Activated T-helper 2 cell treated with anti-CD3 and anti-CD28 coated beads, Interferon-gamma antibody, Interleukin-2, Interleukin-4, amounts not matched to agents 10 μg/mL and 5 μg/mL and 100 μg/mL, durations not matched to agents 14 hours and 24 hours and 36 hours (primary cell): ENCODE measurements at regions of chr12 and their contacts with region 1.

Region 1: DNA sequence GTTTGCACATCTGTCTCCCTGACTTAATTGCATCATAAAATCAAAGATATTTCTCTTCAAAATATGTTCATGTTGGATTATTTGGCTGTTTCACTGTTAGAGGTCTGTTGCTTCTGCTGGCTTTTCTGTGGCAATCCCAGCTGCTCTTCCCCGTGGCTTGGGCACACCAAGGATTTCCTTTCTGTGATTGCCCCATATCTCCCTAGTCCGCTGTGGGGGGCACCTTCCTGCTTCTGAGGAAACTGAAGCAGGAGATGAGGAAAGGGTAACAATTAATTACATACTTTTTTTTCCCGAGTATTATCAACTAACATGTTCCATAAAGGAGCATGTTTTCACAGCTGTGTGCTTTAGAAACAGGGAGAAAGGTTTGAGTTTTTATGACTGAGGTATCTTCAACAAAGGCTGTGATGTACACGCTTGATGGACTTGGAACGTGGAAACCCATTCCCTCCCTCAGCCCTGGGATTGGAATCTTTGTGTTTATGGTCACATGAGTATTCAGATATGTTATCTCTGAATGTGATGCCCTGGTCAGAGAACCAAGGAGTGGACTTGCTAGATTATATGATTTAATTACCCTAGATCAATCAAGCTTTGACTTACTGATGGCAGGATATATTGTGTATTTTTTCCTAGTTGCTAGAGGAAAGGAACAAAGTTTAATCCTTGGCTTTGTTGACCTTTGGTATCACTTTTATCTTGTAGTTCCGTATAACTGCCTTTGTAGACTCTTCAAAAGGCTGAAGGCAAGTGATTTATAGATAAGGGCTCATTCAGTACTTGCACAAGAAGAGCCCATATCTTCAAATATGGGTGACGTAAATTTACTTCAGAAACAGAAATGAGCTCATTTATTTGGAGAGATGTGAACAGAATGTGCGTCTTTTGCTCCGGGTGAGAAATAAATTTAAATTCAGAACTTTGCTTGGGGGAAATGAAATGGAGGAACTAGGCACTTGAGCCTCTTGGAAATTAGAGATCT is 46.7 kb downstream of the BORCS5 start:
- DNase-seq: no peak
- H3K4me3 Mint-ChIP-seq: peak overlapping the region; percentile 49
- H3K27ac Mint-ChIP-seq: peak overlapping the region; percentile 90
- H3K4me1 Mint-ChIP-seq: peaks cover 58% of the 10 kb centered on the region
- H3K27me3 Mint-ChIP-seq: no peaks in the 10 kb centered on the region

Region 2: DNA sequence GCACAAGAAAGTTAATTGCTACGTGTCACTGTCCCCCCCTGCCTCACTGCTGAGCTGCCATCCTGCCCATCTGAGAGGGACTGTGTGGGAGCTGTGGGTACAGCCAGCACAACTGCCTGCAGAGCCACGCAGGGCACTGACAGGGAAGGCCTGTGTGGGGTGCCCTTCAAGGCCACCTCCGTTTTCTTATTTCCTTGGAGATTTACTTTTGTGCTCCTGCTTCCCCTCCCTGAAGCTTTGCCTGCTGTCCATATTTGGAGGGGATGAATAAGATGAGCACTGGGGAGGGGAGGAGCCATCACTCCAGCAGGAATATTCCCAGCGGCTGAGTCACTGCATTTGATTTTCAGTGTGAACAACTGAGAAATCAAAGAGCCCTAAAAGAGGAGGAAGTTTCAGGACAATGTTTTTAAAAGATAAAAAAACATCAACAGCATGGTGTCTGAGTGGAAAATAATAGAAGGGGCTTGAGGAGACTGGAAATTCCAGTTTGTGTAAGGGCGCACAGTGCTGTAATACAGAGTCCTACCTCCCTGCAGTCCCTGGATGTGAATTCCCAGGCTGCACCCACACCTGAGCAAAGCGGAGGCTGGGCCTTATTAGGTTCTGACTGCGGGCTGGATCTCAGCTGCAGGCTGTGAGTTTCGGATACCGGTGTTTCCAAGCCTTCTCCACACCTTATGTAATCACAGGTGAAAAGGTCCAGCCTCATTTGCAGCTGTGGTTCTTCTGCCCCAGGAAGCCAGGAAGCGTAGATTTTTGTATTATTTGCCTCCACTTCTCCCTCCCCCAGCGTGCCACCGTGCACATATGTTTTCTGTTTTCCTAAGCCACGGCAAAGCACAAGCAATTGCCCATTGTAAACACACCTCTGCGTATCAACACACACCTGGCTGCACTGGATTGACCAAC is 525.4 kb before region 1 on chr12:
- intact Hi-C with region 1: no loop called
- DNase-seq: no peak
- H3K4me3 Mint-ChIP-seq: no peak overlapping the region
- H3K27ac Mint-ChIP-seq: no peak overlapping the region
- H3K4me1 Mint-ChIP-seq: peaks cover 34% of the 10 kb centered on the region
- H3K27me3 Mint-ChIP-seq: no peaks in the 10 kb centered on the region

Region 3: GRCh38 chr12:12384571-12385340 is 18.8 kb before region 1 on chr12:
- intact Hi-C with region 1: loop called (anchors 2 kb)
- DNase-seq: peak; percentile 57
- H3K4me3 Mint-ChIP-seq: peak overlapping the region; percentile 49
- H3K27ac Mint-ChIP-seq: peak overlapping the region; percentile 94
- H3K4me1 Mint-ChIP-seq: peaks cover 38% of the 10 kb centered on the region
- H3K27me3 Mint-ChIP-seq: no peaks in the 10 kb centered on the region

Region 4: GRCh38 chr12:12425616-12426015 is 22.1 kb after region 1 on chr12:
- intact Hi-C with region 1: loop called (anchors 2 kb)
- DNase-seq: no peak
- H3K4me3 Mint-ChIP-seq: no peak overlapping the region
- H3K27ac Mint-ChIP-seq: no peak overlapping the region
- H3K4me1 Mint-ChIP-seq: peaks cover 38% of the 10 kb centered on the region
- H3K27me3 Mint-ChIP-seq: no peaks in the 10 kb centered on the region